CD4-positive, alpha-beta T cell (primary cell): ENCODE measurements at regions of chr15 and their contacts with region 1.

Region 1: DNA sequence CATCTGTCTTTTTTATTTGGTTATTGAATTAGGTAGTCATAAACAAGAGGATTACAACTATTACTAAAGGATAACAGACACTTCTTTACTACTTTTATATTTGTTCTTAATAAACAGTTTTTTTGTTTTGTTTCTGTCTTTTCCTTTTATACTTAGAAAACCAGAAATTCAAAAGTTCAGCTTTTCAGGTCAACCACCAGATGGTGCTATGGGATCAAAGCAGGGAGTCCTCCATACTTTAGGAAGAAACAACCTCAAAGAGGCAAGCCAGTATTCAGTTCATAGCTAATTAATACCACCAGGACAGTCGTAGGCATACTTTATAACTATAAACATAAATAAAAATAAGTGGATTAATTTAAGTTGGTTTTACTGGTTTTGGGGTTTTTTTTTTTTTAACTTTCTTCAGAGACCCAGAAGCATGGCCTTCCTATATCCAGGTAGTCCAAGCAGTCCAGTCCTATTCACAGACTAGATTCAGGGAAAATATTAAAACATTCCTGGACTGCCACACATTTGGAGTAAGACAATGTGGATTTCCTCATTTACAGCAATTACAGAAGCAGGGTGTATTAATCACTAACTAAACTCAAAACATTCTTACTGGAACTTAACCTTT is 16.0 kb upstream of the EID1 start:
- DNase-seq: peak in 10 of 14 experiments; percentile 7 to 82 (median 34)
- ATAC-seq: peak; percentile 74
- H3K4me3 ChIP-seq: no peak overlapping the region
- H3K4me3 Mint-ChIP-seq: no peak overlapping the region
- H3K27ac ChIP-seq: no peak overlapping the region
- H3K27ac Mint-ChIP-seq: no peak overlapping the region
- H3K4me1 ChIP-seq: no peaks in the 10 kb centered on the region
- H3K4me1 Mint-ChIP-seq: no peaks in the 10 kb centered on the region
- H3K27me3 ChIP-seq: no peaks in the 10 kb centered on the region
- H3K27me3 Mint-ChIP-seq: peaks cover 4% of the 10 kb centered on the region
- CTCF ChIP-seq: peak; percentile 87

Region 2: GRCh38 chr15:48877630-48878595 is 16.0 kb after region 1 on chr15 and contains the start of gene EID1:
- CTCF ChIA-PET with region 1: interaction called, 6 read pairs
- POLR2A ChIA-PET with region 1: interaction called, 11 read pairs
- intact Hi-C with region 1: no loop called
- DNase-seq: peak; percentile 84 to 98 (median 90)
- ATAC-seq: peak; percentile 93
- H3K4me3 ChIP-seq: peak within 1 kb of the TSS; percentile 92
- H3K4me3 Mint-ChIP-seq: peak within 1 kb of the TSS; percentile 94
- H3K27ac ChIP-seq: peak within 1 kb of the TSS; percentile 68 to 78
- H3K27ac Mint-ChIP-seq: peak within 1 kb of the TSS; percentile 95
- H3K4me1 ChIP-seq: peaks cover 7% of the 10 kb centered on the region
- H3K4me1 Mint-ChIP-seq: peaks cover 23% of the 10 kb centered on the region
- H3K27me3 ChIP-seq: no peaks in the 10 kb centered on the region
- H3K27me3 Mint-ChIP-seq: peaks cover 25% of the 10 kb centered on the region
- CTCF ChIP-seq: no peak
- total RNA-seq, gene EID1: 41.0 to 45.3 TPM

Region 3: DNA sequence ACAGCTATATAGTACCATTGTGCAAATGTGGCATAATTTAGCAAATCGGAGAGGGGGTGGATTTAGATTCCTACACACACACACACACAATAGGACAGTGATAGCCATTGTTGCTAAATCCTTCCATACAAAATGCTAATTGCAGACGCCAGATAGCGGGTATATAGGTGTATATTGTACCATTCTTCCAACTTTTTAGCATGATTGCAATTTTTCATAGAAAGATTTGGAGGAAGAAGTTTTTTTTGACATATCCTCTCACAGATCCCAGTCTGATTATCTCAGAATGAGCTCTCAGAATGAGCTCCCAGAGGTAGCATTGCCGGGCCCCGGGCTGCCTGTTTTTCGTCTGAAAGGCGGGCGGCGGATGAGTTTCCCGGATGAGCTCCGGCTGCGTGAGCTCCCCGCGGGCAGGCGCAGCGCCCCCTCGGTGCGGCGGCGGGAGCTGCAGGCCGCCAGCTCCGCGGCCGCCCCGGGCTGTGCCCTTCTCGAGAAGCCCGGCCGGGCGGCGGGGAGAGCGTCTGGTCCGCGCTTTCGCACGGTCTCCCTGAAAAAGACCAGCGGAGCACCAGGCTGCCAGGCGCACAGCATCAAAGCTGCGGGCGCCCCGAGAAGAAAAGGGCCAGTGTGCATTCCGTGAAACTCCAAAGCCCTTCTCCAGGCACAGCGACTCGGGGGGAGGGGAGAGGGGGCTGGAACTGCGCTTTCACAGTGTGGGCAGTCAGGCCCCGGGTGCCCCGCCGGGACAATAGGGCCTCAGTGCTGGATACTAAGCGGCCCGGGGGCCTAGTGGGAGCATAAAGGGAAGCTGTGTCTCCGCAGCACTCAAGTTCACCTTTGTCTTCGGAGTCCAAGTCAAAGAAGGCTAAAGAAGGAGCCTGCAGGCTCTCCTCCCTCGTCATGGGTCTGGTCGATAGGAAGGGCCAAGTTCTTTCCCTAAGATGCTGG is 113.8 kb after region 1 on chr15:
- CTCF ChIA-PET with region 1: interaction called, 5 read pairs
- POLR2A ChIA-PET with region 1: no interaction called
- intact Hi-C with region 1: loop called in 1 of 2 experiments (anchors 1 kb)
- DNase-seq: peak; percentile 46 to 86 (median 65)
- ATAC-seq: peak; percentile 99
- H3K4me3 ChIP-seq: peak overlapping the region; percentile 60
- H3K4me3 Mint-ChIP-seq: peak overlapping the region; percentile 62
- H3K27ac ChIP-seq: no peak overlapping the region
- H3K27ac Mint-ChIP-seq: no peak overlapping the region
- H3K4me1 ChIP-seq: peaks cover 6% of the 10 kb centered on the region
- H3K4me1 Mint-ChIP-seq: peaks cover 4% of the 10 kb centered on the region
- H3K27me3 ChIP-seq: peaks cover 8% of the 10 kb centered on the region in 2 experiments
- H3K27me3 Mint-ChIP-seq: peaks cover 38% of the 10 kb centered on the region
- CTCF ChIP-seq: peak; percentile 88

Region 4: DNA sequence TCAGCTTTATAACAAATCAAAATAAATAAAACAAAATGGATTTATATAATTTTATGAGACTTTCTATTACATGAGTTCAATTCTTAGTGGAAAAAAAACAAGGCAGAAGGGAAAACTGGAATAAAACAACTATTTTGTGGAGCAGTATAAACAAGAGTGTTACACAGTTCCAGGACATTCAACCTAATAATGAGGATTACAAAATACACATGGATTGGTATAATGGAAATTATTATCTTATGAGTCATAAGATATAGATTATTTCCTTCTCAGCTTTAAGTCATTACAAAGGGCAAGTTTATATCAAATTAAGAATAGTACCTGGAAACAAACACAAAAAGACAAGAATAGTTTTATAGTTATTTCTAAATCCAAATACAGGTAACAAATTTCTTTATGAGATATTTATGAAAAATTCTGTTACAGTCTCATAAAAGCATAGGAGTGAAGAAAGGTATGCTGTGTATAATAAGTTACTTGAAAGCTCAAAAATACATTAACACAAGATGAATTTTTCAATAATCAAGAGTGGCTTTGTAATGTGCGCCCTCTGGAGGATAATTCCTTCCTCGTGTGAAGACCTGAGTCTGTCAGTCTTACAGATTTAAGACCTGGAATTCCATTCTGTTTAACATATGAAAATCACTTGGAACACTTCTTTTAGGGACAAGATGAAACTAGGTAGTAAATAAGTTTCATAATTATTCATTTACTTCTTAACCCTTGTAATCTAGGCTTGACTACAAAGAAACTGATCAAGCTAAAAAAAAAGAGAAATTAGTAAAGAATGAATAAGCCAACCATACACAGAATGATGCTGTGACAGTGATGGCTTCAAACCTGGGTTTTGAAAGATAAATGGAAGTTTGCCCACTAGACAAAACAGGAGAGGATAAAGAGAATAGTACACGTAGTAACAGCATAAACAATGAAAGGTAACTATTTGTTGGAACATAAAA is 284.0 kb after region 1 on chr15:
- CTCF ChIA-PET with region 1: interaction called, 12 read pairs
- POLR2A ChIA-PET with region 1: no interaction called
- intact Hi-C with region 1: loop called (anchors 1 to 2 kb)
- DNase-seq: peak in 7 of 14 experiments; percentile 1 to 66 (median 46)
- ATAC-seq: peak; percentile 43
- H3K4me3 ChIP-seq: no peak overlapping the region
- H3K4me3 Mint-ChIP-seq: no peak overlapping the region
- H3K27ac ChIP-seq: no peak overlapping the region
- H3K27ac Mint-ChIP-seq: no peak overlapping the region
- H3K4me1 ChIP-seq: no peaks in the 10 kb centered on the region
- H3K4me1 Mint-ChIP-seq: peaks cover 64% of the 10 kb centered on the region
- H3K27me3 ChIP-seq: no peaks in the 10 kb centered on the region
- H3K27me3 Mint-ChIP-seq: no peaks in the 10 kb centered on the region
- CTCF ChIP-seq: peak; percentile 66

Region 5: GRCh38 chr15:49421991-49422390 is 560.1 kb after region 1 on chr15:
- CTCF ChIA-PET with region 1: interaction called, 15 read pairs
- POLR2A ChIA-PET with region 1: no interaction called
- intact Hi-C with region 1: loop called (anchors 1 to 2 kb)
- DNase-seq: peak in 8 of 14 experiments; percentile 5 to 67 (median 34)
- ATAC-seq: peak; percentile 41
- H3K4me3 ChIP-seq: no peak overlapping the region
- H3K4me3 Mint-ChIP-seq: peak overlapping the region; percentile 31
- H3K27ac ChIP-seq: no peak overlapping the region
- H3K27ac Mint-ChIP-seq: peak overlapping the region; percentile 67
- H3K4me1 ChIP-seq: no peaks in the 10 kb centered on the region
- H3K4me1 Mint-ChIP-seq: peaks cover 5% of the 10 kb centered on the region
- H3K27me3 ChIP-seq: no peaks in the 10 kb centered on the region
- H3K27me3 Mint-ChIP-seq: peaks cover 5% of the 10 kb centered on the region
- CTCF ChIP-seq: peak; percentile 72

Region 6: DNA sequence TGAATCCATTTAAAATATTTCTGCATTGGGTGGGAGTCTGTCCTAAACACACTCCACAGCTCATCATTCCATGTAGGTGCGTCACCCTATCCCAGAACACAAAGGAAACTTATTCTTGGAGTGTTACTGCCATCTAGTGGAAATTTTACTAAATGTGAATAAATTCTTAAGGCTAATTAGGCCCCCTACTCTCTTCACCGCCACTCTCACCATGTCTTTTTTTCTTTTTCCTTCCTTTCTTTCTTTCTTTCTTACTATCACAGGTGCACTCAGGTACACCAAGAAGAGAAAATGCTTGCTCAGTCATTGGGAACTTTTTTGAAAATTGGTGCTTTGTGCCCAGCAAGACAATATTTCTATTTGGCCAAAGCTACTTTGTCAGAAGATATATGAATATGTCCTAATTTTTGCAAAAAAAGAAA is 1283.5 kb after region 1 on chr15:
- CTCF ChIA-PET with region 1: interaction called, 5 read pairs
- POLR2A ChIA-PET with region 1: no interaction called
- intact Hi-C with region 1: loop called (anchors 1 kb)
- DNase-seq: peak in 3 of 14 experiments; percentile 56 to 68 (median 65)
- ATAC-seq: no peak
- H3K4me3 ChIP-seq: no peak overlapping the region
- H3K4me3 Mint-ChIP-seq: no peak overlapping the region
- H3K27ac ChIP-seq: no peak overlapping the region
- H3K27ac Mint-ChIP-seq: no peak overlapping the region
- H3K4me1 ChIP-seq: no peaks in the 10 kb centered on the region
- H3K4me1 Mint-ChIP-seq: no peaks in the 10 kb centered on the region
- H3K27me3 ChIP-seq: peaks cover 0 to 5% of the 10 kb centered on the region in 2 experiments
- H3K27me3 Mint-ChIP-seq: no peaks in the 10 kb centered on the region
- CTCF ChIP-seq: peak; percentile 83

Region 7: GRCh38 chr15:50315814-50316630 is 1454.1 kb after region 1 on chr15:
- CTCF ChIA-PET with region 1: interaction called, 4 read pairs
- POLR2A ChIA-PET with region 1: no interaction called
- intact Hi-C with region 1: loop called (anchors 5 kb)
- DNase-seq: peak in 3 of 14 experiments; percentile 63 to 69 (median 65)
- ATAC-seq: peak; percentile 49
- H3K4me3 ChIP-seq: no peak overlapping the region
- H3K4me3 Mint-ChIP-seq: no peak overlapping the region
- H3K27ac ChIP-seq: no peak overlapping the region
- H3K27ac Mint-ChIP-seq: no peak overlapping the region
- H3K4me1 ChIP-seq: no peaks in the 10 kb centered on the region
- H3K4me1 Mint-ChIP-seq: peaks cover 29% of the 10 kb centered on the region
- H3K27me3 ChIP-seq: no peaks in the 10 kb centered on the region
- H3K27me3 Mint-ChIP-seq: no peaks in the 10 kb centered on the region
- CTCF ChIP-seq: peak; percentile 83